ENCODE measurements at regions of chr2 and their contacts with region 1.

Region 1: GRCh38 chr2:186589612-186590349 is at the start of gene ITGAV:
- DNase-seq: peak; percentile 65 to 88
- ATAC-seq: peak; percentile 79 to 94 (median 85)
- H3K4me3 ChIP-seq: peak within 1 kb of the TSS; percentile 52
- H3K4me3 Mint-ChIP-seq: peak within 1 kb of the TSS; percentile 88
- H3K27ac ChIP-seq: peak within 1 kb of the TSS; percentile 66
- H3K27ac Mint-ChIP-seq: peak within 1 kb of the TSS; percentile 62 to 85
- H3K4me1 ChIP-seq: peaks cover 12% of the 10 kb centered on the region
- H3K4me1 Mint-ChIP-seq: peaks cover 21 to 36% of the 10 kb centered on the region in 2 donors
- H3K27me3 ChIP-seq: no peaks in the 10 kb centered on the region
- H3K27me3 Mint-ChIP-seq: peaks cover 9 to 10% of the 10 kb centered on the region in 2 donors
- CTCF ChIP-seq: no peak
- total RNA-seq, gene ITGAV: 10.7 to 14.7 (median 12.0) TPM

Region 2: GRCh38 chr2:186485871-186486650 is 103.7 kb before region 1 on chr2 and contains the start of gene ZC3H15:
- intact Hi-C with region 1: loop called (anchors 2 kb)
- DNase-seq: peak; percentile 94 to 99
- ATAC-seq: peak; percentile 91 to 99 (median 93)
- H3K4me3 ChIP-seq: peak within 1 kb of the TSS; percentile 88
- H3K4me3 Mint-ChIP-seq: peak within 1 kb of the TSS; percentile 99
- H3K27ac ChIP-seq: peak within 1 kb of the TSS; percentile 89
- H3K27ac Mint-ChIP-seq: peak within 1 kb of the TSS; percentile 97 to 98
- H3K4me1 ChIP-seq: no peaks in the 10 kb centered on the region
- H3K4me1 Mint-ChIP-seq: peaks cover 54 to 57% of the 10 kb centered on the region in 2 donors
- H3K27me3 ChIP-seq: no peaks in the 10 kb centered on the region
- H3K27me3 Mint-ChIP-seq: no peaks in the 10 kb centered on the region
- CTCF ChIP-seq: no peak
- total RNA-seq, gene ZC3H15: 92.5 to 115 (median 106) TPM

Region 3: DNA sequence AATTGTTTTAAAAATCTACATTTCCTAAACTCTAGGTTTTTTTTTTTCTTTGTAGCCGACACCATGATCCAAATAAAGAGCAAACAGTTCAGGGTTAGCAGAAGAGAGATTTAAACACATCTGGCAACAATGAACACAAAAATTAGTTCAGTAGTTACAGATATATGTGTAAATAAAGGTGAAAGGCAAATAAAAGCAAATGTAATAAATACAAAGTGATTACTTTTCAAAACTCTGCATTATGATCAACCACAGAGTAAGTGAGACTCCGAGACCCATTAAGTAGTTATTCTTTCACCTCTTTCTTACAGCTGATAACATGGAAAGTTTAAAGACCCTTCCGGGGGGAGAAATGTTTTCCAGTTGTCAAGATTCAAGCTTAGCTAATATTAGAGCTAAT is 857.6 kb after region 1 on chr2:
- intact Hi-C with region 1: loop called (anchors 5 kb)
- DNase-seq: no peak
- ATAC-seq: no peak
- H3K4me3 ChIP-seq: no peak overlapping the region
- H3K4me3 Mint-ChIP-seq: peak overlapping the region; percentile 47
- H3K27ac ChIP-seq: no peak overlapping the region
- H3K27ac Mint-ChIP-seq: no peak overlapping the region
- H3K4me1 ChIP-seq: no peaks in the 10 kb centered on the region
- H3K4me1 Mint-ChIP-seq: peaks cover 5 to 8% of the 10 kb centered on the region in 2 donors
- H3K27me3 ChIP-seq: no peaks in the 10 kb centered on the region
- H3K27me3 Mint-ChIP-seq: no peaks in the 10 kb centered on the region
- CTCF ChIP-seq: no peak

Measured in natural killer cell (primary cell).